ENCODE measurements at regions of chrX and their contacts with region 1.

Region 1: GRCh38 chrX:140057001-140057411 is 91.7 kb upstream of the CXorf66 start:
- DNase-seq: peak; percentile 76
- ATAC-seq: peak; percentile 71 to 76

Region 2: GRCh38 chrX:139642241-139642927 is 414.6 kb before region 1 on chrX:
- intact Hi-C with region 1: no loop called
- DNase-seq: no peak
- ATAC-seq: no peak

Region 3: DNA sequence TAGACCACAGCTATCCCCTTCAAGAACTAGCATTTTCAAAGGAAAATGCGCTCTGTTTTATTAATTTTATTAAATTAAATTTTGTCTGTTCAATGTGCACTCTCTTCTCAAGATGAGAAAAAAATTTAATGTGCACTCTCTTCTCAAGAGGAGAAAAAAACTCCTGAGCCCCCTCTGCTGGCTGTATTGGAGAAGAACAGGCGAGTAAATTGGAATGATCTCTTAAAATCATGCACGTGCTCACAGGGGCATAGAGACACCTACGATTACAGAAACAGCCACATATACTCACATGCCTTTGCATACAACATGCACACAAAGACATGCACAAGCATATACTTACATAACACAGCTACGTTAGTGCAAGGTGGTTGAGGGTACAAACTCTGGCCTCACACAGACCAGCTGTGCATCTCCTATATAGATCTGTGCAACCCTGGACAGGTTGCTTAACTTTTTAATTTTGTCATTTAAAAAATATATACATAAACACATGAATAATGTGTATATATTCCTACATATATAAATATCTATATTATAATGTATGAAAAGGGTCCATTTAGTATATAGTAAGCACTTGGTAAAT is 84.5 kb after region 1 on chrX:
- intact Hi-C with region 1: loop called in 1 of 2 experiments (anchors 10 kb)
- DNase-seq: no peak
- ATAC-seq: no peak

Region 4: DNA sequence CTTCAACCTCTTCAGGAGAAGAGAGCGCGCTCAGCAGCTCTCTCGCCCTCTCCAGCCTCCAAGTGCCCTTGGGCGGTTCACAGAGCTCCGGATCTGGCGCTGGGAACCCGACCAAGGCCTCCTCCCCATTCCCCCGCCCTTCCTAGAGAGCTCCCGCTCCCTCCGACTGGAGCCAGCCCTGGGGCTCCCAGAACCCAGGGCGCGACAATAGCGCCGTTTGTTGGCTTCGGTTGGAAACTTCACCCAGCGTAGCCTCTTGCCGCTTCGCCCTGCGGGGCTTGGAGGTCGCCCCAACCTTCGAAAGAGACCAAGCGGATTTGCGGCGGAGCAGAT is 451.0 kb after region 1 on chrX:
- intact Hi-C with region 1: loop called in 1 of 2 experiments (anchors 5 kb)
- DNase-seq: no peak
- ATAC-seq: no peak

Region 5: GRCh38 chrX:140664939-140665338 is 607.9 kb after region 1 on chrX:
- intact Hi-C with region 1: loop called (anchors 2 to 10 kb)
- DNase-seq: no peak
- ATAC-seq: peak in 1 of 2 donors; percentile 55

Region 6: DNA sequence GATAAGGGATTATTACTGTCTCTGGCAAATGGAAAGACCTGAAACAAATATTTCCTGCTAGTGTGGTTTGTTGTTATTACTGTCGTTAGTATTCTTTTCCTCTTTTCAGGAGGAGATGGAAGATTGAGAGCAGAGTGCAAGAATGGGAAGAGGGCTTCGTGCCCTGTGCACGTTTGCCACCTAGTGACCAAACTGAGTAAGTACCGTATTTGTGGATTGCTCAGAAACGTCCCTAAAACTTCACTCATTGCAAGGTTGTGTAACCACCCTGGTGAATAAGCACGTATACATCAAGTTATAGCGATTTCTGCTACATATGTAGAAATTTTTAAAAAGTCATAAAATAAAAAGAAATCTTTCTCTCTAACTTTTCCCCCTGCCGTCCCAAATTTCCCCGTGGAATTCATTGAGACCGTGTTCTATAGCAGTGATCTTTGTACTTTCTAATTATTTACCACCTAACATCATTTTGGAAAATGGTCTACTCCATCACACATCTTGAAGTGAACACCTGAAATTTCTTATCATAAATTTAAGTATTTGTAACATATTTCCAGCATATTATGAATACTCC is 676.9 kb after region 1 on chrX:
- intact Hi-C with region 1: loop called in 1 of 2 experiments (anchors 5 kb)
- DNase-seq: no peak
- ATAC-seq: peak; percentile 57 to 59

Measured in left cardiac atrium (tissue), 4 donors.